Aorta (tissue), 5 donors: ENCODE measurements at regions of chr3 and their contacts with region 1.

Region 1: GRCh38 chr3:11568503-11569155 is 75.1 kb downstream of the VGLL4 start:
- DNase-seq: peak; percentile 94 to 97
- ATAC-seq: peak; percentile 91
- H3K4me3 ChIP-seq: no peak overlapping the region
- H3K27ac ChIP-seq: peak overlapping the region; percentile 90 to 99
- H3K4me1 ChIP-seq: peaks cover 0 to 2% of the 10 kb centered on the region in 2 donors
- H3K27me3 ChIP-seq: no peaks in the 10 kb centered on the region

Region 2: DNA sequence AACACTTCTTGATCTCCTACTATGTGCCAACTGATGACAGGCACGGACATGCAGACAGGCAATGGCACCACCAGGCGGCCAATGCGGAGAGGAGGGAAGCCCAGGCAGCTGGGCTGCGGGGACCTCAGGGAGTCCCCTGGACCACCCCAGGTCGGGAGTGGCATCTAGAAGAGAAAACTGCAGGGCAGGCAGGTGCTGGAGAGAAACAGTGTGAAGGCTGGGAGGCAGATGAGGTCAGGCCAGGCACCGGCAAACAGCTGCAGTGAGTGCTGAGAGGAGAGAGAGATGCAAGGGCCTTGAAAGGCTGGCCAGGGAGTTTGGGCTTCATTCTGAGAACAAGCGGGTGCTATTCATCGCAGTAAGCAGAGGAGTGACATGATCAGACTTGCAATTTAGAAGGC is 547.0 kb before region 1 on chr3:
- intact Hi-C with region 1: no loop called
- DNase-seq: peak in 1 of 2 donors; percentile 40
- ATAC-seq: no peak
- H3K4me3 ChIP-seq: no peak overlapping the region
- H3K27ac ChIP-seq: no peak overlapping the region
- H3K4me1 ChIP-seq: no peaks in the 10 kb centered on the region
- H3K27me3 ChIP-seq: no peaks in the 10 kb centered on the region

Region 3: GRCh38 chr3:11465744-11466616 is 102.6 kb before region 1 on chr3:
- intact Hi-C with region 1: loop called in 1 of 2 experiments (anchors 5 kb)
- DNase-seq: peak in 1 of 2 donors; percentile 68
- ATAC-seq: peak; percentile 93
- H3K4me3 ChIP-seq: no peak overlapping the region
- H3K27ac ChIP-seq: peak overlapping the region; percentile 86 to 92
- H3K4me1 ChIP-seq: peaks cover 0 to 4% of the 10 kb centered on the region in 2 donors
- H3K27me3 ChIP-seq: no peaks in the 10 kb centered on the region

Region 4: GRCh38 chr3:11477407-11477911 is 91.2 kb before region 1 on chr3:
- intact Hi-C with region 1: no loop called
- DNase-seq: no peak
- ATAC-seq: peak; percentile 81
- H3K4me3 ChIP-seq: no peak overlapping the region
- H3K27ac ChIP-seq: peak overlapping the region; percentile 53 to 98
- H3K4me1 ChIP-seq: peaks cover 0 to 5% of the 10 kb centered on the region in 2 donors
- H3K27me3 ChIP-seq: no peaks in the 10 kb centered on the region

Region 5: GRCh38 chr3:11517601-11518000 is 51.0 kb before region 1 on chr3:
- intact Hi-C with region 1: loop called in 1 of 2 experiments (anchors 5 kb)
- DNase-seq: no peak
- ATAC-seq: no peak
- H3K4me3 ChIP-seq: no peak overlapping the region
- H3K27ac ChIP-seq: no peak overlapping the region
- H3K4me1 ChIP-seq: peaks cover 3 to 5% of the 10 kb centered on the region in 2 donors
- H3K27me3 ChIP-seq: no peaks in the 10 kb centered on the region

Region 6: DNA sequence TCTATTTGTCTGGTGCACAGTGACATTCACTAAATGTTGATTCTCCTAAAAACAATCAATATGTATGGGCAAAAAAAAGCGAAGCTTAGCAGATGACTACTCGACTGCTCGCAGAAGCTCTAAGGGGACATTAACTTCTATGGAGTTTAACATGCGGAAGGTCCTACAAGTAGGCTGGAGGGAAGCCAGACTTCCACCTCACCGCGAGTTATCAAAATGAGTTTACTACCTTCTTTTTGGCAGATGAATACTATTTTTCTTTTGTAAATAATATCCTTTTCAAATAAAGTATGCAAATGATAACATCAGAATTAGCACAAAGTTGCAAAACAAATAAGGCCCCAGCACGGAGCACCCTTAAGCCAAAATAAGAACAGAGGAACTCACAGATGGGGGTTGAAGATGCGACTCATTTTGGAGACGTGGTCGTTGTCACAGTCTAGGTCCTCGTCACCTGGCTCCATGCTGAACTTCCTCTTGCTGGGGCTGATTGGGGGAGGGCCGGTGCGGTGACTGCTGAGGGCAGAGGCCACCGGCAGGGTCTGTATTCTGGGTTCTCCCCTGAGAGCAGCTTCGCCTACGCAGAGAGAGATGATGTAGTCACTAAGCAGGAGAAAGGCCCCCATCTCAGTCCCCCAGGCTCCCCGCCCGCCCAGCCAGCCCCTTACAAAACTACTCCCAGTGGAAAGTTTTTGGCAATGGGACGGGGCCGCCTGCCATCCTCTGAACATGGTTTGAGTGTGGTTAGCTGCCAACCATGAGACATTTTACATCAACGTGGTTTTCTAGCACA is 33.0 kb after region 1 on chr3:
- intact Hi-C with region 1: loop called in 1 of 2 experiments (anchors 5 kb)
- DNase-seq: peak; percentile 86 to 93
- ATAC-seq: peak; percentile 76
- H3K4me3 ChIP-seq: peak overlapping the region in 1 of 2 donors; percentile 11
- H3K27ac ChIP-seq: peak overlapping the region; percentile 84 to 99
- H3K4me1 ChIP-seq: peaks cover 3 to 11% of the 10 kb centered on the region in 2 donors
- H3K27me3 ChIP-seq: no peaks in the 10 kb centered on the region

Region 7: DNA sequence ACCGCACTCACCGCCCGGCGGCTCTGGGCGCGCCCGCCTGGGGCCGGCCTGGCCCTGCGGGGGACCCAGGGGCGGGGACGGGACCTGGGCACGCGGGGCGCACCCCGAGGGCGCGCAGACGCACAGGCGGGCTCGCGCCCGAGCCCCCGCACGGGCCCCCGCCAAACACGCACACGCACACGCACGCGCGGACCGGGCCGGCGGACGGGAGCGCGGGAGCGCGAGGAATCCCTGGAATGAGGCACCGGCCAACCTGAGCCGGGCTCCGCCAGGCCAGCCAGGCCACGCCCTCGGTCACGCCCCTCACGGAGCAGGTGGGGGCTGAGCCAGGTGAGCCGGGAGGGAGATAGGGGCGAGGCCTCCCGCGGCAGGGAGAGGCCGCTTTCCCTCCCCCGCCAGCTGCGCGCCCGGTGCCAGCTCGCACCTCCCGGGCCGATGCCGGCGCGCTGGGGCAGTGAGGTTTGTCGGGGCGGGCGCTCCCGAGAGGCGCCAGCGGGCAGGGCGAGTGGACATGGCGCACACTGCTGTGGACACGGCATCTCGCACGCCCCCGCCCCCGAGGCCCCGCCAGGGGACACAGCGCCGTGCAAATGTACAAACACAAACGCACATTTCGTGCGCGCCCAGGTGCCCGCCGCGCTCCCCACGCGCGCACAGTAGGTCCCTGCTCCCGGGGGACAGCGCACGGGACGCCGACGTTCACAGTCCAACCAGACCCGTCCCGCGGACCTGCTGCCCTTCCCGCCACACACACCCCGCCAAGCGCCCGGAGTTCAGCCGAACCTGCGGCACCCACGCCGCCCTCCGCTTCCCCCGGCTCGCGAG is 151.0 kb after region 1 on chr3:
- intact Hi-C with region 1: no loop called
- DNase-seq: peak; percentile 84 to 91
- ATAC-seq: peak; percentile 77
- H3K4me3 ChIP-seq: peak overlapping the region; percentile 73 to 83
- H3K27ac ChIP-seq: peak overlapping the region; percentile 87 to 94
- H3K4me1 ChIP-seq: peaks cover 0 to 7% of the 10 kb centered on the region in 2 donors
- H3K27me3 ChIP-seq: no peaks in the 10 kb centered on the region

Region 8: DNA sequence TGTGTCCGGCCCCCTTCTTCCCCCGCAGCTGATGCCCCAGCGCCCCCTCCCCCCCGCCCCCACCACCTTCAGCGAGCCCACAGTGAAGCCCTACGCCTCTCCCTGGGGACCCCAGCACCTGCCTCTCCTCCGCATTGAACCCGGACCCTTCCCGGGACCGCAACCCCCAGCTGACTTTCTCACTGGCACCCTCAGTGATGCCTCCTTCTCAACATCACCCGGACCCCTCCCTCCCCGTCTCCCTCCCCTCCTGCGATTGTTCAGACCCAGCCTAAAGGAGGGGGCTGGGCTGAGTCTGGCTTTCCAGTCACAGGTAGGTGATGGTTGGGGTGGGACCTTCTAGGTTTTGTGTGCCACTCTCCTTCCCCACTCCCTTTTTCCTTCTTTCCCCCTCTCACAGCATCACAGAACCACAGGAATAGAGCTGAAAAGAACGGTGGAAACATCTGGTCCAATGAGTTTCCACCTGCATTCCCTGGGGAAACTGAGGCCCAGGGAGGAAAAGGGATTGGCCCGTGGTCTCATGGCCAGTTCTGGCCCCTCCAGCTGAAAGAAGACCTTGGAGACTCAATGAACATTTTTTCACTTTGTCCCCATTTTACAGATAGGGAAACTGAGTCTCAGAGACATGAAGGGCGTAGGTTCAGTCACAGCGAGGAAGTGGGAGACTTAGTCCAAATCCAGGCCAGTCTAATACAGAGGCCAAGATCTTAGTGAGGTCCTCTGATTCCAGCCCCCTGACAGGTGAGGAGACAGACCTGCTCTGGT is 1228.7 kb after region 1 on chr3:
- intact Hi-C with region 1: no loop called
- DNase-seq: no peak
- ATAC-seq: no peak
- H3K4me3 ChIP-seq: peak overlapping the region in 1 of 2 donors; percentile 70
- H3K27ac ChIP-seq: peak overlapping the region; percentile 49 to 91
- H3K4me1 ChIP-seq: no peaks in the 10 kb centered on the region
- H3K27me3 ChIP-seq: no peaks in the 10 kb centered on the region